Activated naive CD4-positive, alpha-beta T cell treated with anti-CD3 and anti-CD28 coated beads for 36 hours (primary cell): ENCODE measurements at regions of chr6 and their contacts with region 1.

Region 1: GRCh38 chr6:106114492-106115265 is 28.5 kb downstream of the PRDM1 start:
- DNase-seq: peak; percentile 83
- H3K4me3 Mint-ChIP-seq: no peak overlapping the region
- H3K27ac Mint-ChIP-seq: peak overlapping the region; percentile 52
- H3K4me1 Mint-ChIP-seq: peaks cover 70% of the 10 kb centered on the region
- H3K27me3 Mint-ChIP-seq: peaks cover 31% of the 10 kb centered on the region

Region 2: GRCh38 chr6:106103728-106104109 is 11.0 kb before region 1 on chr6:
- CTCF ChIA-PET with region 1: interaction called, 6 read pairs
- intact Hi-C with region 1: loop called (anchors 1 kb)
- DNase-seq: peak; percentile 63
- H3K4me3 Mint-ChIP-seq: peak overlapping the region; percentile 20
- H3K27ac Mint-ChIP-seq: peak overlapping the region; percentile 1
- H3K4me1 Mint-ChIP-seq: peaks cover 57% of the 10 kb centered on the region
- H3K27me3 Mint-ChIP-seq: peaks cover 4% of the 10 kb centered on the region

Region 3: GRCh38 chr6:106141441-106142237 is 27.0 kb after region 1 on chr6:
- CTCF ChIA-PET with region 1: interaction called, 5 read pairs
- intact Hi-C with region 1: loop called (anchors 1 kb)
- DNase-seq: peak; percentile 75
- H3K4me3 Mint-ChIP-seq: peak overlapping the region; percentile 13
- H3K27ac Mint-ChIP-seq: peak overlapping the region; percentile 83
- H3K4me1 Mint-ChIP-seq: peaks cover 31% of the 10 kb centered on the region
- H3K27me3 Mint-ChIP-seq: no peaks in the 10 kb centered on the region

Region 4: GRCh38 chr6:106181664-106182418 is 67.2 kb after region 1 on chr6:
- CTCF ChIA-PET with region 1: interaction called, 3 read pairs
- intact Hi-C with region 1: loop called (anchors 1 kb)
- DNase-seq: no peak
- H3K4me3 Mint-ChIP-seq: no peak overlapping the region
- H3K27ac Mint-ChIP-seq: no peak overlapping the region
- H3K4me1 Mint-ChIP-seq: peaks cover 33% of the 10 kb centered on the region
- H3K27me3 Mint-ChIP-seq: no peaks in the 10 kb centered on the region

Region 5: GRCh38 chr6:106194949-106195921 is 80.6 kb after region 1 on chr6:
- CTCF ChIA-PET with region 1: no interaction called
- intact Hi-C with region 1: loop called (anchors 2 kb)
- DNase-seq: no peak
- H3K4me3 Mint-ChIP-seq: peak overlapping the region; percentile 59
- H3K27ac Mint-ChIP-seq: peak overlapping the region; percentile 88
- H3K4me1 Mint-ChIP-seq: peaks cover 38% of the 10 kb centered on the region
- H3K27me3 Mint-ChIP-seq: no peaks in the 10 kb centered on the region